ENCODE measurements at regions of chr6 and their contacts with region 1.

Region 1: GRCh38 chr6:3045369-3045768 is 22.9 kb upstream of the RIPK1 start:
- DNase-seq: no peak
- ATAC-seq: no peak
- H3K4me3 ChIP-seq: no peak overlapping the region
- H3K27ac ChIP-seq: no peak overlapping the region
- H3K4me1 ChIP-seq: no peaks in the 10 kb centered on the region
- H3K27me3 ChIP-seq: no peaks in the 10 kb centered on the region
- CTCF ChIP-seq: no peak
- POLR2A ChIP-seq: no peak

Region 2: GRCh38 chr6:3009930-3010329 is 35.4 kb before region 1 on chr6:
- intact Hi-C with region 1: loop called in 1 of 2 experiments (anchors 5 kb)
- DNase-seq: no peak
- ATAC-seq: peak in 1 of 4 donors; percentile 22
- H3K4me3 ChIP-seq: no peak overlapping the region
- H3K27ac ChIP-seq: no peak overlapping the region
- H3K4me1 ChIP-seq: no peaks in the 10 kb centered on the region
- H3K27me3 ChIP-seq: no peaks in the 10 kb centered on the region
- CTCF ChIP-seq: no peak
- POLR2A ChIP-seq: no peak

Measured in right lobe of liver (tissue), 6 donors.